ENCODE measurements at regions of chr2 and their contacts with region 1.

Region 1: GRCh38 chr2:46915811-46916630 is 415 bp upstream of the MCFD2 start:
- DNase-seq: peak; percentile 93
- H3K4me3 ChIP-seq: peak overlapping the region; percentile 93 to 99
- H3K27ac ChIP-seq: peak overlapping the region; percentile 87 to 97
- H3K4me1 ChIP-seq: peaks cover 18% of the 10 kb centered on the region
- H3K27me3 ChIP-seq: no peaks in the 10 kb centered on the region
- CTCF ChIP-seq: no peak
- POLR2A ChIP-seq: no peak

Region 2: DNA sequence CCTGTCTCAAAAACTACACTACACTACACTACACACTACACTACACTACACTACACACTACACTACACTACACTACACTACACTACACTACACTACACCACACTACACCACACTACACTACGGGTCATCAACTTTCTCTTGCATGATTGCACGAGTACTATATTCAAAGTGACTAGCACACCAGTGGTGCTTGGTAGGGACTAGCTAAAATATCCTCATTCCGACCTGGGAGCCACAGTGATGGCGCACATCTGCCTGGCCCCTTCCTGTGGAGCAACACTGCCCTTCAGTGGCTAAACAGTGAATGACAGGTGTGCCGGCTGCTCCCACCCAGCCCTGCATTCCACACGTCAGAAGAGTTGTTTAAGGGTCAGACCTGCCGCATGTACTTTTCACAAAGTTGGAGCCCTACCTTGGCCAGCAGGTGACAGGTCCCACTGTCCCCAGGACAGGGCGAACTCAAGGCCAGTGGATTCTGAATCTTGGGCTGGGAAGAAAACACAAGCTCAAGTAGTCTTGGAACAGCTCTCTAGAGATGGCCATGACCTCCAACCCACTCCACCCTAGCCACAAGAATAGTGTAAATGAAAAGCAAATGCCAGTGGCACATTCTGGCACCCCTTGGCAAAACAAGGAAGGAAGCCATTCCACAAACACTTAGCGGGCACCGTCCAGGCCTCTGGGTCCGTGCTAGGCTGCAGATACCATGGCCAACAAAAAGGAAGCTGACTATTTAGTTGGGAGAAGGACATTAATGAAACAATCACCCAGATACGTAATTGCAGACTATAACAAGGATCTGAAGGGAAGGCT is 407.2 kb after region 1 on chr2:
- intact Hi-C with region 1: loop called (anchors 10 kb)
- DNase-seq: peak; percentile 81
- H3K4me3 ChIP-seq: no peak overlapping the region
- H3K27ac ChIP-seq: no peak overlapping the region
- H3K4me1 ChIP-seq: no peaks in the 10 kb centered on the region
- H3K27me3 ChIP-seq: no peaks in the 10 kb centered on the region
- CTCF ChIP-seq: peak; percentile 80 to 97 (median 94)
- POLR2A ChIP-seq: no peak

Measured in testis (tissue), 5 donors.